Ascending aorta (tissue), 2 donors: ENCODE measurements at regions of chr4 and their contacts with region 1.

Region 1: GRCh38 chr4:102430461-102430910 is 70.7 kb upstream of the NFKB1 start:
- DNase-seq: no peak
- H3K4me3 ChIP-seq: peak overlapping the region; percentile 66 to 87
- H3K27ac ChIP-seq: peak overlapping the region; percentile 49 to 70
- H3K4me1 ChIP-seq: no peaks in the 10 kb centered on the region
- H3K27me3 ChIP-seq: no peaks in the 10 kb centered on the region
- CTCF ChIP-seq: no peak

Region 2: GRCh38 chr4:102120846-102121245 is 309.6 kb before region 1 on chr4:
- intact Hi-C with region 1: no loop called
- DNase-seq: no peak
- H3K4me3 ChIP-seq: no peak overlapping the region
- H3K27ac ChIP-seq: no peak overlapping the region
- H3K4me1 ChIP-seq: no peaks in the 10 kb centered on the region
- H3K27me3 ChIP-seq: no peaks in the 10 kb centered on the region
- CTCF ChIP-seq: no peak

Region 3: GRCh38 chr4:102500696-102501446 is 70.4 kb after region 1 on chr4 and contains the start of gene NFKB1:
- intact Hi-C with region 1: loop called (anchors 2 kb)
- DNase-seq: peak; percentile 19 to 82
- H3K4me3 ChIP-seq: peak within 1 kb of the TSS; percentile 88 to 98
- H3K27ac ChIP-seq: peak within 1 kb of the TSS; percentile 93 to 99
- H3K4me1 ChIP-seq: peaks cover 0 to 20% of the 10 kb centered on the region in 2 donors
- H3K27me3 ChIP-seq: no peaks in the 10 kb centered on the region
- CTCF ChIP-seq: no peak
- total RNA-seq, gene NFKB1: 34.5 TPM